ENCODE measurements at regions of chr6 and their contacts with region 1.

Region 1: DNA sequence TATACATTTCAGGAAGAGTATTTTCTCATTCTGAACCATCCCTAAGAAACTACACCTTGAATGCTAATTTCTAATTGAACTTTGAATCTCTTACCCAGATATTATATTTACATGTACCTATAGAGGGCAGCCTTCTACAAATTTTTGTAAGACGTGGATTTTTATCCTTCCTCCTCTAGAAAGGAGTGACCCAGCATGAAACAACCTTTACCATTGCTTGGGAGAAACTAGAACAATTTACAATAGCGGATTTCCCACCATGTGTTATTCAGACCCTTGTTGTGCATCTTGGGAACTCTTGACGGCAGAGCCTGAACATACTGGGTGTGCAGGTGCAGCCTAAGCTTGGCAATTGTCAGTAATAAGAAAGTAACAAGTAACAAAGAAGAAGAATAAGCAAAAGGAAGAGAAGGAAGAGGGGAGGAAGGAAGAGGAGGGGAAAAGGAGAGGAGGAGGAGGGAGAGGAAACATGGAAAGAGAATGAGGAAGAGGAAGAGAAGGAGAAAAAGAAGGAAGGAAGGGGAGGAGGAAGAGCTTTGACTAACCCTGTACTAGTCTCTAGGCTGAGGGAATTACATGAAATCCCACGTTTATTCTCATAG is 10.8 kb upstream of the TAAR1 start:
- DNase-seq: no peak
- ATAC-seq: peak; percentile 68
- H3K4me3 Mint-ChIP-seq: peak overlapping the region; percentile 55
- H3K27ac Mint-ChIP-seq: no peak overlapping the region
- H3K4me1 Mint-ChIP-seq: peaks cover 5% of the 10 kb centered on the region
- H3K27me3 Mint-ChIP-seq: no peaks in the 10 kb centered on the region
- CTCF ChIP-seq: peak; percentile 49

Region 2: DNA sequence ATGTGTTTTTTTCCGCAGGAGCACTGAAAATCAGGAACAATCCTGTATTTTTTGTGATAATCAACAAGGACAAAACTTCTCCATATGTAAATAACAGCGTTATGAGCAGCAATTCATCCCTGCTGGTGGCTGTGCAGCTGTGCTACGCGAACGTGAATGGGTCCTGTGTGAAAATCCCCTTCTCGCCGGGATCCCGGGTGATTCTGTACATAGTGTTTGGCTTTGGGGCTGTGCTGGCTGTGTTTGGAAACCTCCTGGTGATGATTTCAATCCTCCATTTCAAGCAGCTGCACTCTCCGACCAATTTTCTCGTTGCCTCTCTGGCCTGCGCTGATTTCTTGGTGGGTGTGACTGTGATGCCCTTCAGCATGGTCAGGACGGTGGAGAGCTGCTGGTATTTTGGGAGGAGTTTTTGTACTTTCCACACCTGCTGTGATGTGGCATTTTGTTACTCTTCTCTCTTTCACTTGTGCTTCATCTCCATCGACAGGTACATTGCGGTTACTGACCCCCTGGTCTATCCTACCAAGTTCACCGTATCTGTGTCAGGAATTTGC is 99.5 kb before region 1 on chr6 and contains the start of gene TAAR6:
- CTCF ChIA-PET with region 1: no interaction called
- POLR2A ChIA-PET with region 1: no interaction called
- intact Hi-C with region 1: no loop called
- DNase-seq: no peak
- ATAC-seq: no peak
- H3K4me3 Mint-ChIP-seq: no peak within 1 kb of the TSS
- H3K27ac Mint-ChIP-seq: no peak within 1 kb of the TSS
- H3K4me1 Mint-ChIP-seq: no peaks in the 10 kb centered on the region
- H3K27me3 Mint-ChIP-seq: peaks cover 25% of the 10 kb centered on the region
- CTCF ChIP-seq: no peak
- total RNA-seq, gene TAAR6: not detected in 2 replicates

Region 3: GRCh38 chr6:132798869-132799538 is 129.2 kb after region 1 on chr6:
- CTCF ChIA-PET with region 1: interaction called, 18 read pairs
- POLR2A ChIA-PET with region 1: no interaction called
- intact Hi-C with region 1: loop called (anchors 1 kb)
- DNase-seq: peak; percentile 52
- ATAC-seq: peak; percentile 76
- H3K4me3 Mint-ChIP-seq: no peak overlapping the region
- H3K27ac Mint-ChIP-seq: no peak overlapping the region
- H3K4me1 Mint-ChIP-seq: peaks cover 14% of the 10 kb centered on the region
- H3K27me3 Mint-ChIP-seq: no peaks in the 10 kb centered on the region
- CTCF ChIP-seq: no peak

Region 4: GRCh38 chr6:132962936-132963868 is 293.4 kb after region 1 on chr6:
- CTCF ChIA-PET with region 1: interaction called, 4 read pairs
- POLR2A ChIA-PET with region 1: no interaction called
- intact Hi-C with region 1: loop called (anchors 1 kb)
- DNase-seq: peak; percentile 19
- ATAC-seq: peak; percentile 69
- H3K4me3 Mint-ChIP-seq: no peak overlapping the region
- H3K27ac Mint-ChIP-seq: no peak overlapping the region
- H3K4me1 Mint-ChIP-seq: no peaks in the 10 kb centered on the region
- H3K27me3 Mint-ChIP-seq: peaks cover 24% of the 10 kb centered on the region
- CTCF ChIP-seq: peak; percentile 56

Region 5: DNA sequence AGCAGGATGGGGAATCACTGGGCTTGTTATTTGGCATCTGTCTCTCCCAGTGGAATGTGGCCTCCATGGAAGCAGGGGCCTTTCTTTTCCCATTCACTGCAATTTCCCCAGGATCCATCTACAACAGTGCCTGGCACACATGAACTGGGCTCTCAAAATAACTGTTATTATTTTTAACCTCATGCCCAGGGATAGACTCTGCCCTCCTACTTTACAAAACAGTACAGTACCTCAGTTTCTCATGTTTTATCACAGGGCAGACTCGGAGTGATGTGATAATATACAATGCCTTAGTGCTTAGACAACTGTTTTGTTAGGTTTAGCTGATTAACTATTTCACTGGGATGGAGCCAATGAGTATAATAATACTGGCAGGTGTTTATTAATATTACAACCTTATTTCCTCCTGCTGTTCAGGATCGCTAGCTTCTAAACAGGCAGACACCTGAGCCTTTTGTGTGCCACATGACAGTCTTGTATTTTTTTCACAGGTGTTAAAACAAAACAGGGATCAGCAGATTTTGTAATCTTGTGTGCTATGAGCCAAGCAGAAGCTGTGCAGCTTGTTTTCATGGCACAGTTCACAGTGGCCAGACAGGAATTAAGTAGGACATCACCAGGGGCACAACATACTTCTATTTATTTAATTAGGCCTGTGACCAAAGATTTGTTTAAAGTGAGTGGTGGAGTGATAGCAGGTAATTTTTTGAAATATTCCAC is 413.6 kb after region 1 on chr6:
- CTCF ChIA-PET with region 1: no interaction called
- POLR2A ChIA-PET with region 1: no interaction called
- intact Hi-C with region 1: no loop called
- DNase-seq: no peak
- ATAC-seq: no peak
- H3K4me3 Mint-ChIP-seq: no peak overlapping the region
- H3K27ac Mint-ChIP-seq: no peak overlapping the region
- H3K4me1 Mint-ChIP-seq: no peaks in the 10 kb centered on the region
- H3K27me3 Mint-ChIP-seq: no peaks in the 10 kb centered on the region
- CTCF ChIP-seq: no peak

Region 6: DNA sequence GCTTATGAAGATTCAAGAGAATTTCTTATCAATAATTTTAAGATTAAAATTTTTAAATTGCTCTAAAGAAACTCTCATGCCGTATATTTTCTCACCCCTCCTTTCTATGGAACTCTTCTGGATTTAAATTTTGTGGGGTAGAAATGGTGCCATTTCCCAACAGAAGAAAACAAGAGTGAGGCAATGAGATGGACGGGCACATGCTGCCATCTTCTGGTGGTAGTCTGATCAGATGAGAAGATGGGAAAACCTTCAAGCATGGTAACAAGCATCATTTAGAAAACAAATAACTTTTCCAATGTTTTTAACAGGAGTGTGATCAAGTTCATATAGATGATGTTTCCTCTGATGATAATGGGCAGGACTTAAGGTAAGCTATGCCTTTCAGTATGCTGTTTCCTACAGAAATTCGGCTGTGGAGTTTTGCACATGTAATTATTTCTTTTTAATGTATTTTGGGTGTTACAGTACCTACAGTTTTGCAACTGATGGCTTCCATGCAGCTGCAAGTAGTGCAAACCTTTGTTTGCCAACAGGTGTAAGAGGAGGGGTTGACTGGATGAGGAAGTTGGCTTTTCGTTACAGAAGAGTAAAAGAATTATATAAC is 842.7 kb after region 1 on chr6:
- CTCF ChIA-PET with region 1: no interaction called
- POLR2A ChIA-PET with region 1: no interaction called
- intact Hi-C with region 1: loop called (anchors 10 kb)
- DNase-seq: no peak
- ATAC-seq: no peak
- H3K4me3 Mint-ChIP-seq: no peak overlapping the region
- H3K27ac Mint-ChIP-seq: no peak overlapping the region
- H3K4me1 Mint-ChIP-seq: no peaks in the 10 kb centered on the region
- H3K27me3 Mint-ChIP-seq: peaks cover 10% of the 10 kb centered on the region
- CTCF ChIP-seq: no peak

Region 7: GRCh38 chr6:133916650-133917151 is 1246.9 kb after region 1 on chr6:
- CTCF ChIA-PET with region 1: interaction called, 3 read pairs
- POLR2A ChIA-PET with region 1: no interaction called
- intact Hi-C with region 1: loop called (anchors 5 kb)
- DNase-seq: peak; percentile 40
- ATAC-seq: peak; percentile 34
- H3K4me3 Mint-ChIP-seq: no peak overlapping the region
- H3K27ac Mint-ChIP-seq: no peak overlapping the region
- H3K4me1 Mint-ChIP-seq: peaks cover 4% of the 10 kb centered on the region
- H3K27me3 Mint-ChIP-seq: peaks cover 17% of the 10 kb centered on the region
- CTCF ChIP-seq: peak; percentile 76